ENCODE measurements at regions of chr11 and their contacts with region 1.

Region 1: DNA sequence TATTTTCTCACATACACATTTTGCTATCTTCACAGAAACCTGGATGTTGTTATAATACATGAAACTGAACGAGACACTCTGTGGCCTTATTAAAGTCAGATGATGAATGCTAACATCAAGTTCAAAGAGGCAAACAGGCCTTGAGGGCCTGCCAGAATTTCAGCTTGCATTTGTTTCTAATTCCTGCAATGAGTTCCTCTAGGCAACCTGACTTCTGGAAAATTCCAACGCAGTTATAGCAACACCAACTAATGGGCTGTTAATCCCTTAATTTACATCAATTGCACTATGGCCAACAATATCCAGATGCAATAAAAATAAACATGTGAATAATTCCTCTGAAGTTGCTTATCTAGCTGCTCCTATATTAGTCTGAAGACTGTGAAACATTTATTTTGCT is 19.1 kb downstream of the PAX6 start:
- DNase-seq: no peak
- H3K4me3 Mint-ChIP-seq: no peak overlapping the region
- H3K27ac Mint-ChIP-seq: no peak overlapping the region
- H3K4me1 Mint-ChIP-seq: peaks cover 3% of the 10 kb centered on the region
- H3K27me3 Mint-ChIP-seq: peaks cover 22% of the 10 kb centered on the region

Region 2: GRCh38 chr11:31826536-31827438 is 34.8 kb after region 1 on chr11:
- CTCF ChIA-PET with region 1: no interaction called
- intact Hi-C with region 1: loop called (anchors 5 kb)
- DNase-seq: no peak
- H3K4me3 Mint-ChIP-seq: peak overlapping the region; percentile 49
- H3K27ac Mint-ChIP-seq: peak overlapping the region; percentile 31
- H3K4me1 Mint-ChIP-seq: peaks cover 19% of the 10 kb centered on the region
- H3K27me3 Mint-ChIP-seq: peaks cover 73% of the 10 kb centered on the region

Region 3: GRCh38 chr11:31882951-31883392 is 90.9 kb after region 1 on chr11:
- CTCF ChIA-PET with region 1: no interaction called
- intact Hi-C with region 1: no loop called
- DNase-seq: no peak
- H3K4me3 Mint-ChIP-seq: no peak overlapping the region
- H3K27ac Mint-ChIP-seq: no peak overlapping the region
- H3K4me1 Mint-ChIP-seq: no peaks in the 10 kb centered on the region
- H3K27me3 Mint-ChIP-seq: no peaks in the 10 kb centered on the region

Region 4: GRCh38 chr11:32044158-32044863 is 252.3 kb after region 1 on chr11:
- CTCF ChIA-PET with region 1: no interaction called
- intact Hi-C with region 1: no loop called
- DNase-seq: no peak
- H3K4me3 Mint-ChIP-seq: no peak overlapping the region
- H3K27ac Mint-ChIP-seq: no peak overlapping the region
- H3K4me1 Mint-ChIP-seq: no peaks in the 10 kb centered on the region
- H3K27me3 Mint-ChIP-seq: peaks cover 22% of the 10 kb centered on the region

Measured in activated naive CD4-positive, alpha-beta T cell treated with anti-CD3 and anti-CD28 coated beads for 36 hours (primary cell).